ENCODE measurements at regions of chr6 and their contacts with region 1.

Region 1: DNA sequence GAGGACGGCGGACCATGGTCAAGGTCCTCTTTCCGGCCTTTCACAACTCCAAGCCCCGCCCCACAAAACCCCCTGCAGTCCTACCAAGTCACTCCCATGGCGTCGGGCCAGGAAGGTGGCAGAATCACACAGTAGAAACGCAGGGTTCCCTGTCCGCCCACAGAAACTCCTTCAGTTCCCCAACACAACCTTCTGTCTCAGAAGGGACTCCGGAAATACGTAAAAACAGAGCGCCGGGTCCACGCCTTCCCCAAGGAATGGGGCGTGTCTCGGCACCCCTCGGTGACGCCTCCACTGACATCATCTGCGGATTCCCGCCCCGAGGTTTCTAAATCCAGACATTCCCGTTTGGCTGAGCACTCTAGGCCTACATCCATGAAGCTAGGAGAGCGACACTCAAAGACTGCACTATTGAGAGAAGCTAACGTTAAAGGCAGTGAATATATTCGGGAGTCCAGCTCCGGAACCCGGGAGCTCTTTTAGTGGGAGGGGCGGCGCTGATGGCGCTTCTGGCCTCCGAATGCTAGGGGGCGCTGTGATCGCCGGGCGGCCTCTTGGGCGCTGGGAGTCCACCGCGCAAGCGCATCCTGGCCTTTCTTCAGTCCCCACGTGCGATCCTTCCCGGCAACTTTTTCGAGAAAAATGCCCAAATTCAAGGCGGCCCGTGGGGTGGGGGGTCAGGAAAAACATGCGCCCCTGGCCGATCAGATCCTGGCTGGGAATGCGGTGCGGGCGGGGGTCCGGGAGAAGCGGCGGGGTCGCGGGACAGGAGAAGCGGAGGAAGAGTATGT is at the starts of genes BYSL and MED20:
- DNase-seq: peak; percentile 86
- ATAC-seq: peak; percentile 97
- H3K4me3 ChIP-seq: peak within 1 kb of the TSS; percentile 96 to 99
- H3K27ac ChIP-seq: peak within 1 kb of the TSS; percentile 99
- H3K4me1 ChIP-seq: peaks cover 19% of the 10 kb centered on the region
- H3K27me3 ChIP-seq: no peaks in the 10 kb centered on the region
- CTCF ChIP-seq: peak; percentile 99
- total RNA-seq, gene BYSL: 49.1 TPM
- total RNA-seq, gene MED20: 24.5 TPM

Region 2: DNA sequence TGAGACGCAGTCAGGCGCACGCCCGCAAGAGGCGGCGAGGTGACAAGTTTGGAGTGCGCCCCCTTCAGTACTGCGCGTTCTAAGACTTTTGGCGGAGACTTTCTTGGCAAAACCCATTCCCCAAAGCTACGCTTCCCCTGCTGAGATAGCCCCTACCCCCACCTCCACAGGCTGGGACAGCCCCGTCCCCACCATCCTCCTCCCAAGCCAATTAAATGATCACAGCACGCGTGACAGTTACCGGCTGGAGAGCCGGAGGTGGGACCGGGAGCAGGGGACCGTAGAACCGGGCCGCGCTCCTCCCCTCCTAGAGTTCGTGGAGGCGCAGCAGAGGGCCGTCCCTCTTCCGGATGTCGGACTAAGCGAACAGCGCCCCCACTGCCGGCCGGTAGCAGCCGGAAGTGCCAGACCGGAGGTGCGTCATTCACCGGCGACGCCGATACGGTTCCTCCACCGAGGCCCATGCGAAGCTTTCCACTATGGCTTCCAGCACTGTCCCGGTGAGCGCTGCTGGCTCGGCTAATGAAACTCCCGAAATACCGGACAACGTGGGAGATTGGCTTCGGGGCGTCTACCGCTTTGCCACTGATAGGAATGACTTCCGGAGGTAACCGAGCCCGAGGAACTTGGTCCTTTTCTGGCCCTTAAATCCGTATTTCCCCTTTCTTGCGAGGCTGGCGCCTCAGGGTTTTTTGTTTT is 133.7 kb before region 1 on chr6 and contains the start of gene TOMM6:
- CTCF ChIA-PET with region 1: interaction called, 10 read pairs
- POLR2A ChIA-PET with region 1: interaction called, 4 read pairs
- in situ Hi-C with region 1: no loop called
- intact Hi-C with region 1: loop called (anchors 5 kb)
- DNase-seq: peak; percentile 79
- ATAC-seq: peak; percentile 88
- H3K4me3 ChIP-seq: peak within 1 kb of the TSS; percentile 71 to 92
- H3K27ac ChIP-seq: peak within 1 kb of the TSS; percentile 92
- H3K4me1 ChIP-seq: peaks cover 7% of the 10 kb centered on the region; the same call in 1 of the 2 replicates
- H3K27me3 ChIP-seq: no peaks in the 10 kb centered on the region
- CTCF ChIP-seq: peak; percentile 94
- total RNA-seq, gene TOMM6: 234 TPM

Region 3: DNA sequence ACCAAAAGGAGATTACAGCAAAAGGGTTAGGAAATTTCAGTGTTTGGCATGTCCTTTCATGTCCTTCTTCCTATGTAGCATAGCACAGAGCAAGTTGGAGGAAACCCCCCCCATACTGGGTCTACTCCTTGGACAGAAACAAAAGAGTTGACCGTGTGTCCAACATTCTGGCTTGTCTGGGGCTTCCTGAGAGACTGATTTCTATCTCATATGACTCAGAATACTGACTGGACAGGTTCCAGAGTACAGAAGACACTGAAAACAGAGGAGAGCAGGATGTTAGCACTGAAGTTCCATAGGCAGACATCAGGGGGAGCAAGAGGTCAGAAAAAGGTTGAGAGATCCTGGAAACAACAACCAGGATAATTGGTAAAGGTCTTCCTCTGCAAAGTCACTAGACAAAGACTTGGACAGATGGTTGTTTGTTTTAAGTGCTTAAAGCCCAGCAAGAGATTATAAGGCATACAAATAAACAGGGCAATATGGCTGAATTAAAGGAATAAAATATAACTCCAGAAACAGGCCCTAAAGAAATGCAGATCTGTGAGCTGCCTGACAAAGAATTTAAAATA is 74.4 kb before region 1 on chr6:
- CTCF ChIA-PET with region 1: interaction called, 6 read pairs
- POLR2A ChIA-PET with region 1: no interaction called
- in situ Hi-C with region 1: no loop called
- intact Hi-C with region 1: loop called (anchors 5 kb)
- DNase-seq: peak; percentile 84
- ATAC-seq: peak; percentile 93
- H3K4me3 ChIP-seq: no peak overlapping the region
- H3K27ac ChIP-seq: no peak overlapping the region
- H3K4me1 ChIP-seq: no peaks in the 10 kb centered on the region
- H3K27me3 ChIP-seq: no peaks in the 10 kb centered on the region
- CTCF ChIP-seq: peak; percentile 86

Region 4: DNA sequence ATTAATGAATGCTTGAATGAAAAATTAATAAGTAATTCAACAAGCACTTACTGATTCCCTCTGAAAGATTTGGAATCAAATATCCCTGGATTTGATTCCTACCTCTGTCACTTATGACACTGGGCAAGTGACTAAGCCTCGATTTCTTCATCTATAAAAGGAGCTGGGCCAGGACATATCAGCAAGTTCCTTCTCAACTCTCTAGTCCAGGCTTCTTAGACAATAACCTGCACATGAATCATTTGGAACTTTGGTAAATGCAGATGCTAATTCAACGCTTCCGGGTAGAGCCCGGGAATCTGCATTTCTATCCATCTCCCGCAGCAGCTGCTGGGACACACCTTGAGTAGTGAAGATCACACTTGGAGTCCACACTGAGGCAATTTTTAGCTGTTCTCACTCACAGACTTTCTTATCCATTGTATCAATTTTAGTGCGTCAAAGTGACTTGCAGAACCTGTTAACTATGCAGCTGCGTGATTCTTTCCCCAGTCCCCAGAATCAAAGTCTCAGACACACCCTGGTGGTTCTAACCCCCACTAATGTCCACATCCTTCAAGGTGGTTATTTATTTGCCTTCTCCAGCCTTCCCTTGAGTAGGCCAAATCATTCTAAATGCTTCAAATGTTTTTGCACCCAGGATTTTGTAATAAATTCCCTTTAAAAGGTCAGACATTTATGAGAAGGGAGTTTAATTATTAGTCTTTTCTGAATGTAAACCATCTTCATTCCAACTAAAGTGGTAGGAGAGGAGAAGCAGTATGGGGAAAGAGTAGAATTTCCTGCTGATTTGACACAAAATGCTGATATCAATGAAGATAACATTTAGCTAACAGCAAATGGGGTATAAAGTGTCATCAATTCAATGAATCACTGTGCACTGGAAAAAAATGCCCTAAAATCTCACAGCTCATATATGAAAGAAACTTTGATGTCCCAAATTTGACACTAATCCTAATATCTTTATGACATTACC is 46.5 kb after region 1 on chr6:
- CTCF ChIA-PET with region 1: no interaction called
- POLR2A ChIA-PET with region 1: interaction called, 12 read pairs
- in situ Hi-C with region 1: no loop called
- intact Hi-C with region 1: no loop called
- DNase-seq: no peak
- ATAC-seq: peak; percentile 52; the same call in 1 of the 2 replicates
- H3K4me3 ChIP-seq: no peak overlapping the region
- H3K27ac ChIP-seq: no peak overlapping the region
- H3K4me1 ChIP-seq: 0 out of 2 replicates have a peak, but pooled peaks cover 3% of the 10 kb centered on the region
- H3K27me3 ChIP-seq: no peaks in the 10 kb centered on the region
- CTCF ChIP-seq: no peak

Region 5: DNA sequence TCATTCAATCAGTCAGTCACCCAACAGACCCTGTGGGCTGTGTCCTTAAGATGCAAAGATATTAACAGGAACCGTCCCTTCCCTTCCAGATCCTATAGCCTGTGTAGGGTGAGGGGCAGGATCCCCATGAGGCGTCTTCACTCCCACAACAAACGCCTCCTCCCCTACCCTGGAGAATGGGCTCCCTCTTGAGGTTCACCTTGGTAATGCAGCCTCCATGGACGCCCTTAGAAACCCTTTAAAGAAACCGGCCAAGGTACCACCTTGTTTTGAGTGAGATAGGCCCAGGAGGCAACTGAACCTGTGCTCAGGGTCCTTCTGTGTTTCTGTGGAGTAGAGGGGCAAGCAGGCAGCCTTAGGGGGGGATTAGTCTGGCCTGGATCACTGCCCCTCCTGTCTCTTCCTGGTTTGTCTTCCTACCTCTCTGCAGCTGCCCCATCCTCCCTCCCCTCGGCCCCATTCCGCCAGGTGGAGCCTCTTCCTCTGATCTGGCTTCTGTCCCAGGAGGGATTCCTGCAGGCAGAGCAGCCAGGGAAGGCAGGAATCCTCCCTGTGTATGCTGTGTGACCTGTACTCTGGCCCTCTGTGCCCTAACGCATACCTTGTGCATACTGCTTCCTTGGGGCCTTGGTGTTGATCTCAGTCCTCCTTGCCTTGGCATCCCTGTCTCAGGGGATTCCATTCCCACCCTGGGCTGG is 245.5 kb after region 1 on chr6:
- CTCF ChIA-PET with region 1: no interaction called
- POLR2A ChIA-PET with region 1: no interaction called
- in situ Hi-C with region 1: no loop called
- intact Hi-C with region 1: no loop called
- DNase-seq: peak; percentile 78
- ATAC-seq: peak; percentile 88
- H3K4me3 ChIP-seq: no peak overlapping the region
- H3K27ac ChIP-seq: peak overlapping the region; percentile 68
- H3K4me1 ChIP-seq: peaks cover 9% of the 10 kb centered on the region
- H3K27me3 ChIP-seq: no peaks in the 10 kb centered on the region
- CTCF ChIP-seq: peak; percentile 97

Region 6: DNA sequence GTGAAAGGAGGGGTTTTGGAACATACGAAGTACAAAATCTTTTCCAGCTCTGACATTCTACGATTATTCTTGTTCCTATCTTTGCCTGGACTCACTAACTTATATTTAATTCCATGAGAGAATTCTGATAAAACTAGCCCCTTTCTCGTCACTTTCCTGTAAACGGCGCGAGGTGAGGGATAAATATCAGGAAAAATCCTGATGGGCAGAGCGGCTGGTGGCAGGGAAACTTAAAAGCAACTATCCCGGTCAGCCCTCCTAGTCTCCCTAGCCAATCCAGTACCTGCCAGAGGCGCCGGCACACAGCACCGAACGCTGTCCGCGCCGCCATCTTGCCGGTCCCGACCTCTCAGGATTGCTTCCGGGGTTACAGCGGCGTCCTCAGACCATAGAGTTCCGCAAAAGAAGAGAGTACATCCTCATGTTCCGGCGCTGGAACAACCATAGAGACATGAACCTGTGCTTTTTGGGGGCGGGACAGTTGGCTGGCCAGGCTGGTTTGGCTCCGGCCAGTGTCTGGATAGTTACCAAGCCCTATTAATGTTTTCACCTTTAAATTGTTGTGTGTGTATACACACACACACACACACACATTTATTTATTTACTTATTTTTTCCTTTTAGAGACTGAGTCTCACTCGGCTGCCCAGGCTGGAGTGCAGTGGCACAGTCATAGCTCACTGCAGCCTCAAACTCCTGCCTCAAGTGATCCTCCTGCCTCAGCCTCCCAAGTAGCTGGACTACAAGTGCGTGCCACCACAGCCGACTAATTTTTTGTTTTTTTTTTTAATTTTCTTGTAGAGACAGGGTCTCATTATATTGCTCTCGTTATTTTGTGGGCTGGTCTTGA is 296.6 kb after region 1 on chr6 and contains the start of gene MRPS10:
- CTCF ChIA-PET with region 1: no interaction called
- POLR2A ChIA-PET with region 1: no interaction called
- in situ Hi-C with region 1: no loop called
- intact Hi-C with region 1: no loop called
- DNase-seq: no peak
- ATAC-seq: peak; percentile 93
- H3K4me3 ChIP-seq: peak within 1 kb of the TSS; percentile 78 to 80
- H3K27ac ChIP-seq: peak within 1 kb of the TSS; percentile 100
- H3K4me1 ChIP-seq: peaks cover 66% of the 10 kb centered on the region
- H3K27me3 ChIP-seq: no peaks in the 10 kb centered on the region
- CTCF ChIP-seq: no peak
- total RNA-seq, gene MRPS10: 67.6 TPM

Measured in Panc1 (cell line).